ENCODE measurements at regions of chr15 and their contacts with region 1.

Region 1: GRCh38 chr15:83011271-83012075 is at the start of gene C15orf40:
- DNase-seq: peak; percentile 88
- H3K4me3 Mint-ChIP-seq: peak within 1 kb of the TSS; percentile 87
- H3K27ac Mint-ChIP-seq: peak within 1 kb of the TSS; percentile 81
- H3K4me1 Mint-ChIP-seq: peaks cover 48% of the 10 kb centered on the region
- H3K27me3 Mint-ChIP-seq: no peaks in the 10 kb centered on the region
- total RNA-seq, gene C15orf40: 20.6 to 21.7 TPM

Region 2: DNA sequence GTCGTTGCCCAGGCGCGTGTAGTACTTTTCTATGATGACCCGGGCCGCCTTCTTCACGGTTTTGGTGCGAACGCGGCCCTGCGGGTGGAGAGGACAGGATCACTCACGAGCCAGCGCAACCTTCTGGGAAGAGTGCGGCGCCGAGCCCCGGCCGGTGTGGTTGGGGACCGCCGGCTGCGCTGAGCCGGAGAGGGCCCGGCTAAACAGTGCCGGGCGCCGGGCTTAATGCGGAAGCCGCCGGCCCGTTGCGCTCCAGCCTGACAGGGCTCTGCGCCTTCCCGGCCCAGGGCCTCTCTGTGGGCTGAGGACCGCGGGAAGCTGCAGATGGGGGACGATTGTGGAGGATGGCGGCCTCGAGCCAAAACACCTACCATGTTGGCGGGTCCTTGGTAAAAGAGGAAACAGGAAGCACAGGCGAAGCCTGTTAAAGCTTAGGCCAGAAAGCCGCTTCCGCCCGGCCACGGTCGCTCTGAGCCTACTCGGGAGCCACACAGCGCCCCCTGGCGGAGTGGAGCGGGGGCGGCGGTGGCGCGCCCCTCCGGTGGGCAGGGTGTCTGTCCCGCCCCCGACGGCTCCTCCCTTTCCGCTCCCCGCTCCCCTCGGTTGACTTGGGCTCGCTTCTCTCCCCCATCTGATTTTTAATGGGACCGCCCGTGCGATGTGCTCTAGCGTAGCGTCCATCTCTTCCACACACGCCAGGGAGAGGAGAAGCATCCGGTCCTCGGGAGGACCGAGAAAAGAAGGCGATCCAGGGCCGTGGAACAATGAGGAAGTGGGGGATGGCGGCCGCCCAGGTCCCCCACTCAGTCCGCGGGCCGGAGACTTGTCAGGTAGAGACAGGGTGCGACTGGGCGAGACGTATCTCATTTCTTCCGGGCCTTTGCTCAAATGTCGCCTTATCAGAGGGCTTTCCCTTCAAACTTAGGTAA is 471.2 kb before region 1 on chr15 and contains the start of gene RPS17:
- CTCF ChIA-PET with region 1: interaction called, 3 read pairs
- intact Hi-C with region 1: loop called (anchors 1 kb)
- DNase-seq: peak; percentile 96
- H3K4me3 Mint-ChIP-seq: peak within 1 kb of the TSS; percentile 85
- H3K27ac Mint-ChIP-seq: peak within 1 kb of the TSS; percentile 96
- H3K4me1 Mint-ChIP-seq: peaks cover 34% of the 10 kb centered on the region
- H3K27me3 Mint-ChIP-seq: no peaks in the 10 kb centered on the region
- total RNA-seq, gene RPS17: 3,025 to 3,069 TPM

Region 3: GRCh38 chr15:82799183-82799842 is 212.2 kb before region 1 on chr15:
- CTCF ChIA-PET with region 1: no interaction called
- intact Hi-C with region 1: no loop called
- DNase-seq: no peak
- H3K4me3 Mint-ChIP-seq: no peak overlapping the region
- H3K27ac Mint-ChIP-seq: no peak overlapping the region
- H3K4me1 Mint-ChIP-seq: no peaks in the 10 kb centered on the region
- H3K27me3 Mint-ChIP-seq: peaks cover 18% of the 10 kb centered on the region

Region 4: GRCh38 chr15:82809404-82810060 is 201.9 kb before region 1 on chr15 and contains the start of gene WHAMM:
- CTCF ChIA-PET with region 1: no interaction called
- intact Hi-C with region 1: loop called (anchors 1 kb)
- DNase-seq: peak; percentile 97
- H3K4me3 Mint-ChIP-seq: peak within 1 kb of the TSS; percentile 87
- H3K27ac Mint-ChIP-seq: peak within 1 kb of the TSS; percentile 86
- H3K4me1 Mint-ChIP-seq: peaks cover 26% of the 10 kb centered on the region
- H3K27me3 Mint-ChIP-seq: no peaks in the 10 kb centered on the region
- total RNA-seq, gene WHAMM: 3.7 to 5.7 TPM

Region 5: GRCh38 chr15:82999905-83000671 is 11.4 kb before region 1 on chr15:
- CTCF ChIA-PET with region 1: interaction called, 19 read pairs
- intact Hi-C with region 1: no loop called
- DNase-seq: peak; percentile 53
- H3K4me3 Mint-ChIP-seq: peak overlapping the region; percentile 40
- H3K27ac Mint-ChIP-seq: no peak overlapping the region
- H3K4me1 Mint-ChIP-seq: peaks cover 6% of the 10 kb centered on the region
- H3K27me3 Mint-ChIP-seq: no peaks in the 10 kb centered on the region

Region 6: DNA sequence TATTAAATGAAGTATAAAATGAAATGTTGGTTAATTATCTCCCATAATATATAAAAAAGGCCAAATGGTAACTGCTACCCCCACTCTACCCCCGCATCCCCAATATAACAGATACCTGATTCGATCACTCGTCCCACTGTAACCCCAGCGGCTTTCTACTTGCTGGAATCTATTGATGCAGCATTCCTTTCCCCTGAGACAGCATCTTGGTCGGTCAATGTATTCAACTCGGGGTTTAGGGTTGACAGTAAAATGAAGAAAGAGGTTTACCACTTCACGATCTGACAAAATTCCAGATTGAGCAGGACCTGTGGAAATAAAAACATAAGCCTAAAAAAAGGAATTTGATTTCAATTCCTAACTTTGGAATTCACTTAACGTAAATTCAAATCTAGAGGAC is 18.5 kb after region 1 on chr15:
- CTCF ChIA-PET with region 1: no interaction called
- intact Hi-C with region 1: no loop called
- DNase-seq: no peak
- H3K4me3 Mint-ChIP-seq: no peak overlapping the region
- H3K27ac Mint-ChIP-seq: no peak overlapping the region
- H3K4me1 Mint-ChIP-seq: peaks cover 7% of the 10 kb centered on the region
- H3K27me3 Mint-ChIP-seq: no peaks in the 10 kb centered on the region

Region 7: DNA sequence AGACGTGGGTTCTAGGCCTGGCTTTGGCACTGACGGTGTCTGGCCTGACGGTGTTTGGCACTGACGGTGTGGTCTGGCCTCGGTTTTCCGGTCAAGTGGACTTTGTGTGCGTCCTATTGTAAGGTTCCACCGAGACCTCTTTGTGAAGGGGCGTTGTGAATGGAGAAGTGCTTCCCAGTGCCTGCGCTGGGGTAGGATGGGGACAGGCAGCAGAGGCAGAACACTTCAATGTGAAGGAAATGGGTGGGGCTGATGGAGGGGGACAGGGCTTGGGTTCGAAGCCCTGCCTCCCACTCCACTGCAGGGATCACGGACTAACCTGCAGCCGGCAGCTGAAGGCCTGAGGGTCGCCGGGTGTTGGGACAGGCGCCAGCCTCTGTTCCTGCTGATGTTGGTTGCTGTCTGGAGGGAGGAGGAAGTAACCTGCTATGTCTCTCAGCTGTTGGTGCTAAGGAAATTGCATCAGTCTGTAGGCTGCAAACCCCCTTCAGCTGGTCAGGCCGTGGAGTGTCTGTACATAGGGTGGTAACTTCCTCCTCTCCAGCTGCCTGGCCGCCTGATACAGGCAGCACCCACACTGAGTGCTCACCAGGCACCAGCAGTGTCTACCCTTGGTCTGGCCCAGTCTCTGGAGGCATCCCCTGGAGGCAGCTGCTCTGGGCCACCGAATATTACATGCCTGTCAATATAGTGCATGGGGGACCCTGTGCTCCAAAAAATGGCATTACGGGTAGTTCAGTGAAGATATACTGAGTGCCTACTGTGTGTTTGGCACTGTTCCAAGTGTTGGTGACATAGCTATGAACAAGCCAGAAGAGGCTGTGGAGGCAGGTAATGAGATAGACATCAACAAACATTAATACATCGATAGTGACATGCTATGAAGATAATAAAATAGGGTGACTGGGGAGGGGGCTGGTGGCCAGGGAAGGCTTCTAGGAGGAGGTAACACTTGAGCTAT is 97.1 kb after region 1 on chr15:
- CTCF ChIA-PET with region 1: no interaction called
- intact Hi-C with region 1: loop called (anchors 2 kb)
- DNase-seq: peak; percentile 39
- H3K4me3 Mint-ChIP-seq: peak overlapping the region; percentile 81
- H3K27ac Mint-ChIP-seq: no peak overlapping the region
- H3K4me1 Mint-ChIP-seq: peaks cover 16% of the 10 kb centered on the region
- H3K27me3 Mint-ChIP-seq: peaks cover 58% of the 10 kb centered on the region

Region 8: GRCh38 chr15:83207622-83208411 is 196.3 kb after region 1 on chr15 and contains the start of gene HDGFL3:
- CTCF ChIA-PET with region 1: interaction called, 4 read pairs
- intact Hi-C with region 1: loop called (anchors 1 kb)
- DNase-seq: peak; percentile 36
- H3K4me3 Mint-ChIP-seq: peak within 1 kb of the TSS; percentile 70
- H3K27ac Mint-ChIP-seq: peak within 1 kb of the TSS; percentile 47
- H3K4me1 Mint-ChIP-seq: peaks cover 3% of the 10 kb centered on the region
- H3K27me3 Mint-ChIP-seq: peaks cover 25% of the 10 kb centered on the region
- total RNA-seq, gene HDGFL3: 5.9 to 8.1 TPM

Region 9: DNA sequence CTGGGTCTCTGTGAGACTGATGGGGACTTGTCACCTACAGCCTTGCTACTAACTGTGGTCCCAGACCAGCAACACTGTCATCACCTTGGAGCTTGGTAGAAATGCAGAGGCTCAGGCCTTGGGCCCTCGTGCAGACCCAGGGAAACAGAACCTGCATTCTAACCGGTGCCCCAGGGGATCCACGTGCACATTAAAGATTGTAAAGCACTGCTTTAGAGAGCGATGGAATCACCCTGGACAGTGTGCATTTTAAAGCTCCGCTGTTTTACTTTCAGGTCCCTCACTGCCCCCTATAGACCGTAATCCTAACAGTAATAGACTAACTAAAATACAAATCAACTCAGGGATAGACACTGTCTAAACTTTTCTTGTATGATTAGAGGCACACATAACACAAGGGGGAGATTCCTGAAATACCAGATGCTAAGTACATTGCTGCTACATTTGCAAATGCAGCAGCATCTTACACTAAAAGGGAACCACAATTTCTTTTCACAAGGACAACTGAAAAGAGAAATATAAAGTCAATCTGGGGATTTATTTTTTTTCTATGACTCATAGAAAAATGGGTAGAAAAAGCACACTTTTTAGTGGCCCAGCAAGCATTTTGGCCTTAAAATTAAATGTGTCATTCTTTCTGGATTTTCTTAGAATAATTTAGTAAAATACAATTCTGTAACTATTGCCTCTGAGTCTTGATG is 425.1 kb after region 1 on chr15:
- CTCF ChIA-PET with region 1: no interaction called
- intact Hi-C with region 1: loop called (anchors 5 kb)
- DNase-seq: no peak
- H3K4me3 Mint-ChIP-seq: no peak overlapping the region
- H3K27ac Mint-ChIP-seq: no peak overlapping the region
- H3K4me1 Mint-ChIP-seq: peaks cover 5% of the 10 kb centered on the region
- H3K27me3 Mint-ChIP-seq: peaks cover 7% of the 10 kb centered on the region